ENCODE measurements at regions of chr12 and their contacts with region 1.

Region 1: DNA sequence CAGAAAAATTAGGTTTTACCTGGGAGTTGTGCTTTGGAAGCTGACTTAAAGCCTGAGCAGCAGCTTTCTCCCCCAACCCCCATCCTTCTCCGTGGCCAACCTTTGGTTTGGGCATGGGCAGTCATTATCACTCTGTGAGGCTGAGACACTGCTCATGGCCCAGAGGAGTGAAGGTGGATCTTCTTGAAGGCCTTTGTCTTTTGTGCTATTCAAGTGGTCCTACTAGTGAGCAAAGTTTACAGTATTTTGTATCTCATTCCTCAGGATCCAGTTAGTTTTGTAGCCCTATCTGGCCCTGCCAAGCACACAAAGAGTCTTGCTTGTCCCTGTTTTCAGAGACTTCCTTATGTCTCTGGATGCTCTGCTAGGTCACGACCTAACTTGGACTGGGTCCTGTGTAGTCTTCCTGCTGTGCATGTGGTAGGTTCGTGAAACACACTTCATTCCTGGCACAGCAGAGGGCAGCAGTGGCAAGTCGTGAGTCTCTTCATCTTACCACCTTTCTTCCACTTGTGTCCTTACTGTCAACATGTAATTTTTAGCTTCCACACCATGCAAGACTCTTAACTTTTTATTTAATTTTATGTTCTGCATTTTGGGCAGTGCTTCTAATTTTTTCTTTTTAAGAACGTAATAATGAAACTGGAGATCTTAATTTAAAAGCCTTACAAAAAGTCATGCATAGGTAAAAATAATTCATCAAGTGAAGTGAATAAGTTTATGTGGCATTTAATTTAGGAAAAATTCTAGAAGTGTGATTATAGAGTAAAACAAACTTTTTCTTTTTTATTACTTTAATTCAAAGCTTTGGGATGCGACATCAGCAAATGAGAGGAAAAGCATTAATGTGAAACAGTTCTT is 53.7 kb downstream of the APAF1 start:
- DNase-seq: no peak
- H3K4me3 ChIP-seq: no peak overlapping the region
- H3K27ac ChIP-seq: peak overlapping the region in 1 of 4 donors; percentile 10
- H3K4me1 ChIP-seq: peaks cover 6 to 26% (median 25%) of the 10 kb centered on the region in 4 donors
- H3K27me3 ChIP-seq: no peaks in the 10 kb centered on the region
- CTCF ChIP-seq: peak; percentile 51 to 64 (median 55)
- EP300 ChIP-seq: no peak
- POLR2A ChIP-seq: no peak

Region 2: GRCh38 chr12:98644711-98645402 is 54.0 kb before region 1 on chr12 and contains the starts of genes APAF1 and IKBIP:
- intact Hi-C with region 1: no loop called
- DNase-seq: peak; percentile 98
- H3K4me3 ChIP-seq: peak within 1 kb of the TSS; percentile 73 to 97 (median 92)
- H3K27ac ChIP-seq: peak within 1 kb of the TSS; percentile 83 to 89 (median 86)
- H3K4me1 ChIP-seq: peaks cover 8 to 33% (median 31%) of the 10 kb centered on the region in 4 donors
- H3K27me3 ChIP-seq: no peaks in the 10 kb centered on the region
- CTCF ChIP-seq: peak in 1 of 3 experiments; percentile 6
- EP300 ChIP-seq: no peak
- POLR2A ChIP-seq: peak; percentile 22
- total RNA-seq, gene APAF1: 9.1 to 10.9 (median 10.0) TPM
- total RNA-seq, gene IKBIP: 4.2 to 14.0 (median 10.2) TPM

Region 3: GRCh38 chr12:99004799-99005466 is 306.1 kb after region 1 on chr12:
- intact Hi-C with region 1: loop called (anchors 5 kb)
- DNase-seq: no peak
- H3K4me3 ChIP-seq: no peak overlapping the region
- H3K27ac ChIP-seq: no peak overlapping the region
- H3K4me1 ChIP-seq: no peaks in the 10 kb centered on the region
- H3K27me3 ChIP-seq: no peaks in the 10 kb centered on the region
- CTCF ChIP-seq: no peak
- EP300 ChIP-seq: no peak
- POLR2A ChIP-seq: no peak

Measured in esophagus muscularis mucosa (tissue), 4 donors.